AG04449 (cell line): ENCODE measurements at regions of chr3 and their contacts with region 1.

Region 1: DNA sequence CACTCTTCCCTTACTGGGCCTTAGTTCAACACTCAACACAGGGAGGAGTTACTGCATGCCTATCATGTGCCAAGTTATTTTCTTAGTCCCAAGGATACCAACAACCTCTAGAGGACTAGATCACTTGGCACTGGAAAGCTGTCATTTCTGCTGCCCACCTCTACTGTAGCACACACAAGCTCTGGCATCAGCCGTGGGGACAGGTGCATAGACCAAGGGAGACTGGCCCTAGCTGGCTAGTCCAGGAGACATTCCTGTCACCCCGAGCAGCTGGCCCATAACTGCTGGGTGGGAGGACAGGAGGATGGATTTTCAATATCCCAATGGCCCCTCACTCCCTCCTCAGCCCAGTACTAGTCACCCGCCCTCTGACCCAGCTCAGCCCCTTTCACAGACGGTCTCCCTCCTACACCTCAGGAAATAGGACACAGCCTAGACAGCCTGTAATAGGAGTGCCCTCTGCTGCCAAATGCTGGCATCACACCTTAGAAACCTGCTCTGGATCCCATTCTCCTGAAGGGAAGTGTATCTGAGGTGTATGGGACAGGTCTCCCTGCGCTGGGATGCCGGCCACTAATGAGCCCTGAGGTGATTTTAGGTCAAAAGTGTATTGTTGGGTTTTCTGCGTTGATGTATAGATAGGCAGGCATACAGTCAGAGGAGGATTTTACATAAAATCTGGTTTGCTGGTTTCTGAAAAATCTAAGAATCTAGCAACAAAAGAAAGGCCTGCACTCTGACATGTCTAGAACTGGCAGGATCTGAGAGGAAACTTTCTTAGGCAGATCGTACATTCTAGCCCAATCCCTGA is 3.4 kb upstream of the DZIP1L start:
- DNase-seq: peak; percentile 7
- H3K4me3 ChIP-seq: no peak overlapping the region
- CTCF ChIP-seq: peak; percentile 85

Region 2: DNA sequence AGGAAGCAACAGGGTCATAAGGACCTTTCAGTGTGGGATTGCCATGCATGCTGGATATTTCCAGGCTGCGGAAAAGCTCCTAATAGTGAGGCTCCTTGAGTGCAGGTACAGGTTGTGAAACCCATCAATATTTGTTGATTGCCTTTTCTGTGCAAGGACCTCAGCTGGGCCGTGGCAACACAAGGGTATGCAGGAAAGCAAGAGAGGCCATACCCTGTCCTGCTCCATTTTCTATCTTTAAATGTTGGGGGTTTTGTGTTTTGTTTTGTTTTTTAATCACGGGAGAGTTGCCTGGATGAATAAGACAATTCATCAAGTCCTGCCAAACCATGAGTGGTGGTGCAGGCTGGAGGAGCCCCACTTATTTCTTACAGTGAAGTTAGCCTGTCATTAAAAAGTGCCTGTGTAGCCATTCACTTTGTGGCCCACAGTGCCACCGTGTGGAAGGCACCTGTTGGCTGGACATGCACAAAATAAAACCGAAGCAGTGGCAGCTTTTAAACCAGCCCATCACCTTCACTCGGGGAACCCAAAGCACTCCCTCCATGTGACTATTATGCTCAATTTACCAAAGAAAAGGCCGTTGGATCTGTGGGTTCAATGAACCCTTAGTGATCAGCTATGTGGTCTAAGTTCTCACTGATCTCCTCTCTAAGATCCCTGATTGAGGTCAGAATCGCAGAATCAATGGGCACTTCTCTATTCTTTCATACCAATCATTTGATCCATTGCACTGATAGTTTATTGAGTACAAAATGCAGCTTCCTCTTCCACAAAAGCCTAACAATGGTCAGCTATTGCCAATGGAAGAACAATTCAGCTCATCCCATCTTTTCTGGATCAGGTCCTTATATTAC is 66.6 kb before region 1 on chr3:
- CTCF ChIA-PET with region 1: interaction called, 21 read pairs
- POLR2A ChIA-PET with region 1: no interaction called
- DNase-seq: no peak
- H3K4me3 ChIP-seq: no peak overlapping the region
- CTCF ChIP-seq: peak; percentile 78

Region 3: GRCh38 chr3:138068579-138069174 is 50.1 kb before region 1 on chr3:
- CTCF ChIA-PET with region 1: interaction called, 626 read pairs
- POLR2A ChIA-PET with region 1: interaction called, 4 read pairs
- DNase-seq: no peak
- H3K4me3 ChIP-seq: no peak overlapping the region
- CTCF ChIP-seq: peak; percentile 99

Region 4: GRCh38 chr3:138082085-138082991 is 36.5 kb before region 1 on chr3:
- CTCF ChIA-PET with region 1: interaction called, 626 read pairs
- POLR2A ChIA-PET with region 1: interaction called, 15 read pairs
- DNase-seq: peak; percentile 46
- H3K4me3 ChIP-seq: peak overlapping the region; percentile 31
- CTCF ChIP-seq: no peak

Region 5: DNA sequence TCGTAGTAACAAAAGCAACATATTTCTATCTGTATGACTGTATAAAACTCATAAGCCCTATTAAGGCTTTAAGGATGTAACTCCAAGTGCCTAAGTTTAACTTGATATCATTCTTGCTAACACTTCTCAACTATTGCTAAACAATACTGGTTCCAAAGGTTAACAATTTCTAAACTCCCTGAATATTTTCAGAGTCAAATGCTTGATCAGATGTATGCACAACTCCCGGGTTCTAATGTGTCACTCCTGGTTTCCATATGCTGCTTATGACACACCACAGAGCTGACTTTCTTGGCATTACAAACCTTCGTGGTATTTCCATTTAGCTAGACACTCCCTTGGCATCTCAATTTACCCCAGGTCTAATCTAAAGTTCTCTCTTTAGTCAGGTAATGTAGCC is 29.7 kb before region 1 on chr3:
- CTCF ChIA-PET with region 1: interaction called, 14 read pairs
- POLR2A ChIA-PET with region 1: interaction called, 3 read pairs
- DNase-seq: peak; percentile 40
- H3K4me3 ChIP-seq: no peak overlapping the region
- CTCF ChIP-seq: no peak

Region 6: DNA sequence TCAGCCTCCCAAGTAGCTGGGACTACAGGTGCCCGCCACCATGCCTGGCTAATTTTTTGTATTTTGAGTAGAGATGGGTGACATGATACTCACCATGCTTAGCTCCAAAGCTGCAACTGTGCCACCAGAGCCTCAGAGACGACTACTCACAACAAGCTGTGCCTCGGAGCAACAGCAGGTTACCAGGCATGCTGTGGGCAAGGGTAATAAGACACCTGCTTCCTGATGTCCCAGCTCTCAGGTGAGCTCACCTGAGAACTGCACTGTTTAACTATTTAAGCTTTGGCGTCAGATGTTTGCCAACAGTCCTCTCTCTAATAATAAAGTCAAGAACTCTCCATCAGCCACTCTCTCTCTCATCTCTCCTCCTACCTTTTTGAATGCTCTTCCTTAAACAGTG is 10.7 kb before region 1 on chr3:
- CTCF ChIA-PET with region 1: interaction called, 16 read pairs
- POLR2A ChIA-PET with region 1: no interaction called
- DNase-seq: no peak
- H3K4me3 ChIP-seq: no peak overlapping the region
- CTCF ChIP-seq: no peak

Region 7: DNA sequence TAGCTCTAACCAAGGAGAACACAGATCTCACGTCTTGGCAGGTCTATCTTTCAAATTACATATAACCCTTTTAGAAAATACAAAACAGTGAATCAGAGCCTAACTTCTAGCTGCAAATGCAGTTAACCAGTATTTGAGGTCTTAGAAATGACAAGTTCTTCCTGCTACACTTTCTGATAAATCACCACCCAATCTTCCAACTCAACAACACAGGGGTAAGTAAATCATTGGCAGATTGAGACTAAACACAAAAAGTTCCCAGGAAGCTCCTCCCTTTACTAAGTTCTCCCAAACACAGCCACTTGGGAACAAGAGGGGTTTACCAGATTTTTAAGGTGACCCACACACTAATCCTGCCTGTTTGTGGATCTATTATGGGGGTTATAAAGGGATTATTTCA is 13.4 kb after region 1 on chr3 and contains the start of gene A4GNT:
- CTCF ChIA-PET with region 1: interaction called, 21 read pairs
- POLR2A ChIA-PET with region 1: no interaction called
- DNase-seq: no peak
- H3K4me3 ChIP-seq: no peak within 1 kb of the TSS
- CTCF ChIP-seq: no peak